Posterior vena cava (tissue), 2 donors: ENCODE measurements at regions of chr2 and their contacts with region 1.

Region 1: GRCh38 chr2:44433881-44434280 is 72.1 kb downstream of the CAMKMT start:
- DNase-seq: no peak

Region 2: GRCh38 chr2:44361330-44362206 is 72.3 kb before region 1 on chr2 and contains the starts of genes CAMKMT and PREPL:
- intact Hi-C with region 1: no loop called
- DNase-seq: peak; percentile 100
- total RNA-seq, gene CAMKMT: 12.0 to 12.6 TPM
- total RNA-seq, gene PREPL: 46.6 to 73.1 TPM

Region 3: DNA sequence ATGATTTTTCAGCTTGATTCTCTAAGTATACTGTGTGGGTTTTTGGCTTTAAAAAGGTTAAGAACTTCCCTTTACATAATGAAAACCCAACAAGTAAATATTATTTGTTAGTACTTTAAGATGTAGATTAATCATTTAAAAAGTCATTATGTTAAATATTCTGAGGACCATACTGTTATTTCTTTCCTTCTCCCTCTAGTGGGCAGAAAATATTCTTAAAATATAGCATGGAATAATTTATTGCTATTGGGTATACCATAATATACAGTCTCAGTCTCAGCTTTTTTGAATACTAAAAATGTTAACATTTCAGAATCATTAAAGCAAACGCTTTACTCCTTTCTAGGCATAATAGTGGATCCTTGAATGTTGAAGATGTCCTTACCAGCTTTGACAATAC is 44.0 kb before region 1 on chr2:
- intact Hi-C with region 1: no loop called
- DNase-seq: no peak

Region 4: DNA sequence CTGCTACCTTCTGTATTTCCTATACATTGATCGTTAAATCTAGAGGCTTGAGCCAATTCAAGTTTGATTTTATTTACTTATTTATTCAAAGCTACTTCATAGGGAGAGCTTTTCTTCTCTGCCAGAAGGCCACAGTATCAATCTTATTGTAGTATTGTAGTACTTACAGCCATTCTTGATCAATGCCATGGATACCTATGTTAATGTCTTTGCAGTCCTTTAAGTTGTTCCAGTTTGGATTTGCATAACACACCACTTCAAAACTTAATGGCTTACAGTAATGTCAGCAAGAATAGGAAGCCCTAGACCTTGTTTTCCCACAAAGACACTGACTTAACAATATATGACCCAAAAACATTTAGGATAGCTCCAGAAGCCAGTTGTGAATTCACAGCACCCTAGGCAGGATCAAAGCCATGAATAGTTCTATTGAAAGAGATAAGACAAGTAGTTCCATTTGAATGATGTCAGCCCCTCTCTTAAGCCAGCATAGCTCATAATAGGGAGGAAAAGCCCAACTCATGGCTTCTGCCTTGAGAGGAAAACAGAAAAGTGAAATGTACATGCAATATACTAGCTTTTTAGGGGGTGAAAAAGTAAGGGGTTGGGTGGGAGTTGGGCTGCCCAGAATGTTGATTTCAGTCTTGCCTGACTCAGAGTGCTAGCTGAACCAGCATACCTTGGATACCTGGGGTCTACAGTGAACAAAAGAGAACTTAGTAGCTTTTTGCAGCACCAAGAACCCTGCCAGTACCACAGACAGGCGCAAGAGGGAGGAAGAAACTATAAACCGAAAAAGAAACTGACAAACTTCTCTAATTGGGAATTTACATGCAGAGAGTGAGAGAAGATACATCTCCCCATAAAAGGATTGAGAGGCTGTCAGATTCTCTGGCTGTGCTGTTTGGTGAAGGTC is 29.3 kb after region 1 on chr2:
- intact Hi-C with region 1: loop called in 1 of 2 experiments (anchors 2 kb)
- DNase-seq: no peak